ENCODE measurements at regions of chr7 and their contacts with region 1.

Region 1: DNA sequence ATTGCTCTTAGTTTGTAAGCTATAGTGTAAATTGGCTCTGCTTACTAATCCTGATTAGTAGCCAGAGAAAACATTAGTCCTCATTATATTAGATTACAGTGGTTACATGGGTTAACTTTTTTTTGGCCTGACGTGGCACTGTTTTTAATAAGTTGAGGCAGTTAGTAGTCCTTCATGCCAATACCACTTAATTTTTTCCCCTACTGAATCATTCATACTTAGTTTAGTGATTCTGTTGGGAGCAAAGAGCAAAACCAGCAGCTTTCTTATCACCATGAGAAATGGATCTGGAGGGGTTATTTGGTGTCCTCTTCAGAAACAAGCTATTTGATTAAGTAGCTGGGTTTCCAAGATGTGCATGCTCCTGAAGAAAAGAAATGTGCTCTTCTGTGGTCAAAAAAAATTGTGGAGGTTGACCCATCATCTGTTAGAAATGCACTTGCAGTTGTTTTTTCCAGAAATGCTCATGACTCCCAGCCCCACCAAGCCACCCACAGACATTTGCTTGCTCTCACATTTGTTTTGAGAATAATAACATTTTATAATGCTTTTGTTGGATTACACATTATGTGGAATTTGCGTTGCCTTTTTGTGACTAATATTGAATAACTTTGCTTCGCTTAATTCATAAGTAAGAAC is 258.5 kb downstream of the HDAC9 start:
- DNase-seq: no peak
- H3K4me3 ChIP-seq: peak overlapping the region in 1 of 2 donors; percentile 1
- H3K27ac ChIP-seq: no peak overlapping the region
- H3K4me1 ChIP-seq: no peaks in the 10 kb centered on the region
- H3K27me3 ChIP-seq: no peaks in the 10 kb centered on the region
- CTCF ChIP-seq: no peak

Region 2: DNA sequence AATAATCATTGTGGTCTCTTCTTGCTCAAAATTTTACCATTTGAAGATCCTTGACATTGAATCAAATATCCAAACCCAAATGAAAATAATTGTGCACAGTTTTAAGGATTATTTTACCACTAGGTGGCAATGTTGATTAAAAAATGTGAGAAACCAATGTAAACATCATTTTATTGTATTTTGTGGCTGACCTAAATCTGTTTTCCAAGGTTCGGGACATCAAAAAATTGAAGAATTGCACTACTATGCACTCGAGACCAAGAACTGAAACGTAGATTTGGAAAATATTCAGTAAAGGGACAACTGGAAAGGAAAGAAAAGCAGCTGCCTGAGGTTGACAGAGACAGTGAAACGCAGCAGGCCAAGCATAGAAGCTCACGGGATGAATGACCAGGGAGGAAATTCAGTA is 1073.1 kb before region 1 on chr7:
- intact Hi-C with region 1: loop called (anchors 10 kb)
- DNase-seq: no peak
- H3K4me3 ChIP-seq: no peak overlapping the region
- H3K27ac ChIP-seq: peak overlapping the region in 1 of 2 donors; percentile 15
- H3K4me1 ChIP-seq: peaks cover 2 to 13% of the 10 kb centered on the region in 2 donors
- H3K27me3 ChIP-seq: no peaks in the 10 kb centered on the region
- CTCF ChIP-seq: peak; percentile 43 to 63 (median 57)

Region 3: DNA sequence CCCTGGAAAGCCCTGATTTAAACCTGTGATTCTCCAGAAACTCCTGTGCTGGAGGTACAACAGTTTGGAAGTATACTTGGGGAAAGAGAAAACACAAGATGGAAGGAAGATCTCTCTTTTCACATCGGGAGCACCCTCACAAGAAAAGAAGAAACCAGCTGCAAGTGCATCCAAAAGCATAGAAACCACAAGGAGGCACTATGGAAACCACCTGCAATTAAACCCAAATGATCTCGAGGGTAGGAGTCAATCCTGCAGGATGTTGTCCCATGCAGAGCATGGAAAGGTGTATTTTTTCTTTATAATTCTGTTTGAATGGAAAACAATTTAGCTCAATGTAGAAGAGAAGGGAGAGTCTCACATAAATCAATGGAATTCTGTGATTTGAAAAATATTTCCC is 152.8 kb after region 1 on chr7:
- intact Hi-C with region 1: no loop called
- DNase-seq: no peak
- H3K4me3 ChIP-seq: no peak overlapping the region
- H3K27ac ChIP-seq: no peak overlapping the region
- H3K4me1 ChIP-seq: no peaks in the 10 kb centered on the region
- H3K27me3 ChIP-seq: no peaks in the 10 kb centered on the region
- CTCF ChIP-seq: no peak